ENCODE measurements at regions of chr20 and their contacts with region 1.

Region 1: DNA sequence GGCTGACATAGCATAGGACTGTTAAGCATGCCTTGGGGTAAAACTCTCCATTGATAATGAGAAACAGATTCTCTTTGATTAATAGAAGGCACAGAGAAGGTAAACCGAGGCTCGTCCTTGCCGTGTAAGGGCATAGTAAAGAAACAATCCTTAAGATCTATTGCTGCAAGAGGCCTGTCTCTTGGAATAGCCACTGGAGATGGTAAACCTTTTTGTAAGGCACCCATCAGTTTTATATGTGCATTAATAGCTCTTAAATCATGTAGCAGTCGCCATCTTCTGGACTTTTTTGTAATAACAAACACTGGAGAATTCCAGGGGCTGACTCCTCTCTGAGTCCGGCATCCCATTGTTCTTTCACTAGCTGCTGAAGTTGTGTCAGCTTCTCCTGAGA is 8.4 kb upstream of the ABHD12 start:
- DNase-seq: peak; percentile 76
- H3K4me3 Mint-ChIP-seq: no peak overlapping the region
- H3K27ac Mint-ChIP-seq: no peak overlapping the region
- H3K4me1 Mint-ChIP-seq: no peaks in the 10 kb centered on the region
- H3K27me3 Mint-ChIP-seq: no peaks in the 10 kb centered on the region
- CTCF ChIP-seq: peak; percentile 62

Region 2: GRCh38 chr20:25065625-25066338 is 333.3 kb before region 1 on chr20:
- CTCF ChIA-PET with region 1: interaction called, 9 read pairs
- POLR2A ChIA-PET with region 1: no interaction called
- intact Hi-C with region 1: loop called (anchors 5 kb)
- DNase-seq: peak; percentile 59
- H3K4me3 Mint-ChIP-seq: no peak overlapping the region
- H3K27ac Mint-ChIP-seq: no peak overlapping the region
- H3K4me1 Mint-ChIP-seq: peaks cover 12% of the 10 kb centered on the region
- H3K27me3 Mint-ChIP-seq: peaks cover 68% of the 10 kb centered on the region
- CTCF ChIP-seq: peak; percentile 57

Region 3: GRCh38 chr20:25148181-25148981 is 250.7 kb before region 1 on chr20:
- CTCF ChIA-PET with region 1: no interaction called
- POLR2A ChIA-PET with region 1: no interaction called
- intact Hi-C with region 1: no loop called
- DNase-seq: no peak
- H3K4me3 Mint-ChIP-seq: no peak overlapping the region
- H3K27ac Mint-ChIP-seq: no peak overlapping the region
- H3K4me1 Mint-ChIP-seq: no peaks in the 10 kb centered on the region
- H3K27me3 Mint-ChIP-seq: peaks cover 11% of the 10 kb centered on the region
- CTCF ChIP-seq: no peak

Region 4: DNA sequence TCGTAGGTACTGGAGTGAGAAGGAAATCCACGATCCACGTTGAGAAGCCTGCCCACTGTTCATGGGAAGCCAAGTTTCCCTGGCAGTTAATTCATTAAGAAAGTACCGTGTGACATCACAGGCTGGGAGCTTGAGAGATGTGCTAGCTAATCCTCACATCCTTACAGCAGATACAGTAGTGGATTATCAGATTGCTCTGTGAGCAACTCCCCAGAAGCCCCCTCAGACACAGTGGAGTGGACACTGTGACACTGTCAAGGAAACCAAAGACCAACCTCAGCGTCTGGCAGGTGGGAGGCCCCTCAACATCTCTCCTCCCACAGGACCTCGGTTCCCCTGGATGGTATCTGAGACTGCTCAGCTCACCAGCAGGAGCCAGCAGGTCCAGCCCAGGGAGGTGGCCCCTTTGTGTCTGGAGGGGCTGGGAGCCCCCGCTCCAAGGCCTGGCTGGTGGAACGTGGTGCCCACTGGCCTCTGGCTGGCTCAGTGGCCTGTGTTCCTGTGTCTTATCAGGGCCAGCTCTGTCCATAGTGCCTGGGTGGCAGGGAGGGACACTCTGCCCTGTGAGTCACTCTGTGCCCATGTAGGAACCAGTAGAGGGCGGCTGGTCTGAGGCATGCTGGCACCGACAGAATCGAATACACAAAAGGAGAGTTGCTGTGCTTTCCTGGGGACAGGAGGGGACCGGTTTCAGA is 143.9 kb before region 1 on chr20:
- CTCF ChIA-PET with region 1: interaction called, 17 read pairs
- POLR2A ChIA-PET with region 1: interaction called, 34 read pairs
- intact Hi-C with region 1: loop called (anchors 5 kb)
- DNase-seq: peak; percentile 68
- H3K4me3 Mint-ChIP-seq: peak overlapping the region; percentile 93
- H3K27ac Mint-ChIP-seq: peak overlapping the region; percentile 87
- H3K4me1 Mint-ChIP-seq: peaks cover 43% of the 10 kb centered on the region
- H3K27me3 Mint-ChIP-seq: no peaks in the 10 kb centered on the region
- CTCF ChIP-seq: peak; percentile 15

Region 5: DNA sequence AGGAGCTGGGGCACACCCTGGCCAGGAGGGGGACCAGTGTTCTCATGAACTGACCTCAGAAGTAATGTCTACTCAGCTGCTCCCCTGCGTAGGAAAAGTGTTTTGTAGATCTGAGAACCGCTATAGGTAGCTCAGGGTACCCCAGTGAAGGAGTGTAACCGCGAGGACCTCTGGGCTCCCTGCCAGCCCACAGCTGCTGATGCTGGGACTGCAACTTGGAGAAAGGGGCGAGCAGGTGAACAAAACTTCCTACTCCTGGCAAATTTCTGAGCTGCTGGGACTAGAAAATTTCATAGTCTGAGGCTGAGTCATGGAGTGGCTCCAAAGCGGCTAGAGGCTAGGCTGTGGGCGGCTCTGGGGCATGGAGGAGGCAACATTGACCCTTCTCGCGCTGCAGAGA is 99.2 kb before region 1 on chr20:
- CTCF ChIA-PET with region 1: interaction called, 79 read pairs
- POLR2A ChIA-PET with region 1: interaction called, 11 read pairs
- intact Hi-C with region 1: no loop called
- DNase-seq: peak; percentile 30
- H3K4me3 Mint-ChIP-seq: no peak overlapping the region
- H3K27ac Mint-ChIP-seq: peak overlapping the region; percentile 64
- H3K4me1 Mint-ChIP-seq: peaks cover 8% of the 10 kb centered on the region
- H3K27me3 Mint-ChIP-seq: no peaks in the 10 kb centered on the region
- CTCF ChIP-seq: no peak

Region 6: DNA sequence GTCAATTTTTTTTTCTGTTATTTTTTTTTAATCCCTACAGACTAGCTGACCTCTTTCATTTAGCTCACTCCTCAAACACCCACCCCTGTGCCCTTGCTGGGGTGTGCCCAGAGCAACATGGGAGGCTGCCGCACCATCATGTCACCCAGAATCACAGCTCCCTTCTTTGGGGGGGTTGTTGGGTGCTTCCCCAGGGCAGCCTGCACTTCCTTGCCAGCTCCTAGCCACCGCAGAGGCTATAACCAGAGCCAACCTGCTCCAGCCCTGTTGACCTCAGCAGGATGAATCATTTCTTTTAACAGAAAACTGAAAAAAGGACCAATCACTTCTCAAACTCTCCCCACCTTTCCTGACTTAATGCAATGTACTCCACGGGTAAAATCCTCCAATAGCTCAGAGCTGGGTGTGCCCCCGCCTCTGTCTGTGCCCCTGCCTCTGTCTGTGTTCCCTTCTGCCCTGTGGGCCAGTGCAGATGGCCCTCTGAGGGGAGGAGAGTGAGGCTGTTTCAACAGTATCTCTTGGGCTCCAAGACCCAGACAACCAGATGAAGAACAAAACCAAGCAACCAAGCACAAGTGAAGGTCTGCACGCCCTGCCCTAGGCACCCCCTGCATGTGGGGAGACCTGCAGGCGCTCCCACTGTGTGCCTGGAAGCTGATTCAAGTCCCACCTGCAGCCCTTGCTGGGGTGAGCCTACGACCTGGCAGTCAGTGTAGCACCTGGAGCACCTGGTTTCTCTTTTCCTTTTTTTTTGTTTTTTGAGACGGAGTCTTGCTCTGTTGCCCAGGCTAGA is 83.4 kb before region 1 on chr20:
- CTCF ChIA-PET with region 1: interaction called, 68 read pairs
- POLR2A ChIA-PET with region 1: interaction called, 4 read pairs
- intact Hi-C with region 1: loop called (anchors 1 kb)
- DNase-seq: no peak
- H3K4me3 Mint-ChIP-seq: no peak overlapping the region
- H3K27ac Mint-ChIP-seq: no peak overlapping the region
- H3K4me1 Mint-ChIP-seq: peaks cover 15% of the 10 kb centered on the region
- H3K27me3 Mint-ChIP-seq: no peaks in the 10 kb centered on the region
- CTCF ChIP-seq: no peak